Activated CD8-positive, alpha-beta T cell treated with anti-CD3 and anti-CD28 coated beads, Interleukin-2, amount 10 ng/mL, durations not matched to agents 7 days and 5 days (primary cell): ENCODE measurements at regions of chr4 and their contacts with region 1.

Region 1: DNA sequence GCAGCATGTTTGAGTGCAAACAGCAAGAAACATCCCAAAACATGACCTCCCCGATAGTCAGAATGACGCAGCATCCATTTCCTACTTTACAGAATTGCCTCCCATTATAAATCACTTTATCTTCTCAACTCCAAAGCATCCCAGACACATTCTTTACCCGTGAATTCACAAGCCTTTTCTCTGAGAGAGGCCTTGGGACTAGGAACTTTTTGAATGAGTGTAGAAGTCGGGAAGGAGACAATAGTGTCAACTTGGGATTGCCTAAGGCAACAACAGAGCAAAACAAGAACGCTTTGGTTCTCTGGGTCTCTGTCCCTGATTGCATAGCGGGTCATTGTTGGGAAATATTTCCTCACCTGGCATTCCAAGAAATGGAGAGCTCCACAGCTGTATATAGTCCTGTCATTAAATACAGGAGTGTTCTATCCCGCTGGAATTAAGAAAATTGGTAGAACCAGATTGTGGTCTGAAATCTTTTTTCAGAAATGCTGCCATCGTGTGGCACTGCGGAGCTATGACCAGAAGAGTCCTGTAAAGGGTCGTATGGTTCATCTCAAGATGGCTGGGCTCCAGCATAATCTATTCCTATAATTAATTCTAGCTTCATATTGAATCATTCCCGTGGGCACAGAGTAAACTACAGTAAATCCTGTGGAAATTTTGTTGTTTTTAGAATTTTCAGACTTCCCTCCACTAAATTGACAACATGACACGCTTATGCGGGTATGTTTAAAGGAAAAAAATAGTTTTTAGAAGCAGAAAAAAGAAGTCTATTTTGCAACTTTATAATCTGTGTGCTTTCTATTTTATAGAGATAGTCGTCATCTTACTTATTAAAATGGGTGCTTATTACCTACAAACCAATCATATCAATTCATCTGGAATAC is 2.0 kb upstream of the SPP1 start:
- DNase-seq: peak; percentile 46
- ATAC-seq: peak; percentile 69
- H3K4me3 Mint-ChIP-seq: no peak overlapping the region
- H3K27ac Mint-ChIP-seq: no peak overlapping the region
- H3K4me1 Mint-ChIP-seq: peaks cover 7% of the 10 kb centered on the region
- H3K27me3 Mint-ChIP-seq: peaks cover 41% of the 10 kb centered on the region

Region 2: GRCh38 chr4:87848622-87849351 is 124.7 kb before region 1 on chr4:
- CTCF ChIA-PET with region 1: interaction called, 18 read pairs
- POLR2A ChIA-PET with region 1: no interaction called
- DNase-seq: peak; percentile 57
- ATAC-seq: peak; percentile 94
- H3K4me3 Mint-ChIP-seq: no peak overlapping the region
- H3K27ac Mint-ChIP-seq: no peak overlapping the region
- H3K4me1 Mint-ChIP-seq: peaks cover 10% of the 10 kb centered on the region
- H3K27me3 Mint-ChIP-seq: peaks cover 27% of the 10 kb centered on the region

Region 3: DNA sequence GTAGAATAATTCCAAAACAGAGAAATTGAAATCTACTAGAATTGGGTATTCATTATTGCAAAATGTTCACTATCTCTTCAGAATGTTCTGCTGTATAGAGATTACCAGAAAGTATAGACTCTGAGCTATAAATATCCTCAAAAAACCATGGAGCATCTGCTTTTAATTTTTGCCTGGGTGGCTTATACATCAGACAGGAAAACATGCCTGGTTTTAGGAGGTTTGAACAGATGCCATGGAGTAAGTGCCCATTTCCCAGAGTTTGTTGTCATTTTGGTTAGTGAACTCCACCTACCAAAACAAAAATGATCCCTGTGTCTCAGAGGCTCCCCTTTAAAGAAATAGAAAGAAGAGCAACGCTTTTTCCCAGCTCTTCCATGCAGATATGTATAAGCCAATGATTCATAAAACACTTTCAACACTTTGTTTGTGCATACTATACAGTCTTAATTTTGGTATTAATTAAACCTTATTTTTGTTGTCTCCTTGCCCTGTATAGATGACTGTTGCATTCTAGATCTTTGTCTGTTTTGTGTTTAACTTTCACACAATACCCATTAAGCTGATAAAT is 72.0 kb before region 1 on chr4:
- CTCF ChIA-PET with region 1: no interaction called
- POLR2A ChIA-PET with region 1: no interaction called
- DNase-seq: no peak
- ATAC-seq: no peak
- H3K4me3 Mint-ChIP-seq: no peak overlapping the region
- H3K27ac Mint-ChIP-seq: no peak overlapping the region
- H3K4me1 Mint-ChIP-seq: peaks cover 9% of the 10 kb centered on the region
- H3K27me3 Mint-ChIP-seq: peaks cover 25% of the 10 kb centered on the region

Region 4: DNA sequence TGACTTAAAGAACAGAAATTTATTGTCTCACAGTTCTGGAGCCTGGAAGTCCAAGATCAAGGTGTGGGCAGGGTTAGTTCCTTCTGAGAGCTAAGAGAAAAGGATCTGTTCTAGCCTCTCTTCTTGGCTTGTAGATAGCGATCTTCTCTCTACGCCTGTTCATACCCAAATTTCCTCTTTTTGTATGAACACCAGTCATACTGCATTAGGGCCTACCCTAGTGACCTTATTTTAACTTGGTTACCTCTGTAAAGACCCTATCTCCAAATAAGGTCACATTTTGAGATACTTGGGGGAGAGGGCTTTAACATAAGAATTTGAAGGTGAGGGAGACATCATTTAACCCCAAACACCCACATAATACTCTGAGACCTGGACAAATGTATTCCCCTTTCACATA is 53.6 kb before region 1 on chr4:
- CTCF ChIA-PET with region 1: no interaction called
- POLR2A ChIA-PET with region 1: no interaction called
- DNase-seq: no peak
- ATAC-seq: no peak
- H3K4me3 Mint-ChIP-seq: no peak overlapping the region
- H3K27ac Mint-ChIP-seq: no peak overlapping the region
- H3K4me1 Mint-ChIP-seq: no peaks in the 10 kb centered on the region
- H3K27me3 Mint-ChIP-seq: peaks cover 3% of the 10 kb centered on the region

Region 5: DNA sequence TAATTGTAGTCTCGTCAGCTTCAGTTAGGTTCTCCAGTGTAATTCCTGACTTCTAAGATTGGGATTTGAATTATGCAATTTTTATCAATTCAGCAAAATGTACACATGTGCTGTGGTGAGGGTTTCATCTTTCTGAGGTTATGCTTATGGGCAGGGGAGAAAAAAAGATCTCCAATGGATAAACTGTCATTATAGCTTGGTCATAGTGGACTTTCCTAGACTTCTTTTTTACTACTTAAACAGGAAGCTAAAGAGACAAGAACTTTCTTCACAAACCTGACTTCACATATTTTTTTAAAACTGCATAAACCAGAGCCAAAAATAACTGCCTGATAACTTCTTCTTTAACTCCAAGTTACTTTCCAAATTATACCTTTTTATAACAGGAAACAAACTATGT is 19.7 kb before region 1 on chr4:
- CTCF ChIA-PET with region 1: interaction called, 16 read pairs
- POLR2A ChIA-PET with region 1: no interaction called
- DNase-seq: no peak
- ATAC-seq: no peak
- H3K4me3 Mint-ChIP-seq: no peak overlapping the region
- H3K27ac Mint-ChIP-seq: no peak overlapping the region
- H3K4me1 Mint-ChIP-seq: no peaks in the 10 kb centered on the region
- H3K27me3 Mint-ChIP-seq: peaks cover 10% of the 10 kb centered on the region

Region 6: DNA sequence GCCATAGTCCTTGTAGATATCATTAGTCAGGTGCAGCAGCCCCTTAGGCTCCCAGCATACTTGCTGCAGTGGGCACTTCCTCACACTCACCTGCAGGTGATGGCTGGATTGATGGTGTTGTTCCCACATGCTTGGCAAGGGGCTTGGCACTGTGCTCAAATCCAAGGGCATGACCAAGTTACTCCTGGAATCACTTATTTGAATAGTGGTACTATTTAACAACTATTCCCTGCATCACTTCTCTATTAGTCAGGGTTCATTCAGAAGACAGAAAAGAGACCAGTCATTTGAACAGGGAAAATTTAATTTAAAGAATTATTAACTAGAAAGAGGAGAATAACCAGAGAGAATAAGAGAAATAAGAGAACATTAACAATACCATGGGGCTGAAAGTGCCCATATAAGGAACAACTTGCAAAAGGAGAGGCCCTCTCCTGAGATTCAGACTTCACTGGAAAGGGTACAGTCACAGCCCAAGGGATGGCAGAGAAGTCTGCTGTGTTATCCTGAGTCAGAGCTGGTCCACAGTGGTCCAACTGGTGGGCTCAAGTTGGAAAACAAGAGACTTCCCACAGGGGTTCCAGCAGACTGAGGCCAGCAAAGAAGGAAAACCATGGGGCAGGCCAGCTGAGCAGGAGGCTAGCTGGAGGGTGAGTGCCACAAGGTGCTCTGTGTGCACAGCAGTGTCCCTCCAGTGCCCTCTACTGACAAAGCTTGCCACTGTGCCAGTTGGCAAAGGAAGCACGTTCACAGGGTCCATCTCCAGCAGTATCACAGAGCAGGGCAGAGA is 11.8 kb after region 1 on chr4:
- CTCF ChIA-PET with region 1: interaction called, 16 read pairs
- POLR2A ChIA-PET with region 1: no interaction called
- DNase-seq: peak; percentile 56
- ATAC-seq: peak; percentile 81
- H3K4me3 Mint-ChIP-seq: no peak overlapping the region
- H3K27ac Mint-ChIP-seq: no peak overlapping the region
- H3K4me1 Mint-ChIP-seq: no peaks in the 10 kb centered on the region
- H3K27me3 Mint-ChIP-seq: peaks cover 24% of the 10 kb centered on the region

Region 7: DNA sequence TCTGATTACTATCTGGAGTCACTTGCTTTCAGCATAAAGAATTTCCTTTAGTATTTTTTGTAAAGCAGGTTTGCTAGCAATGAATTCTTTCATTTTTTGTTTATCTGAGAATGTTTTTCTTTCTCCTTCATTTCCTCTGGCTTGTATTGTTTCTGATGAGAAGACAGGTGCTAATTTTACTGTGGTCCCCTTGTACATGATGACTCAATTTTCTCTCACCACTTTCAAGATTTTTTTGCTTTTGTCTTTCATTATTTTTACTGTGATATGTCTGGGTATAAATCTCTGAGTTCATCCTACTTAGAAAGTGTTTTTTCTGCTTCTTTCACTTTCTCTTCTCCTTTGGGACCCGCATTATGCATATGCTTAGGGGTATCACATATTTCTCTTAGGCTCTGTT is 96.5 kb after region 1 on chr4:
- CTCF ChIA-PET with region 1: no interaction called
- POLR2A ChIA-PET with region 1: no interaction called
- DNase-seq: no peak
- ATAC-seq: no peak
- H3K4me3 Mint-ChIP-seq: no peak overlapping the region
- H3K27ac Mint-ChIP-seq: no peak overlapping the region
- H3K4me1 Mint-ChIP-seq: peaks cover 4% of the 10 kb centered on the region
- H3K27me3 Mint-ChIP-seq: no peaks in the 10 kb centered on the region